Activated T-helper 1 cell treated with anti-CD3 and anti-CD28 coated beads, Interleukin-12 subunit alpha, Interleukin-12 subunit beta, Interleukin-2, Interleukin-4 antibody, amounts not matched to agents 30 ng/mL and 10 ng/mL and 1 ng/mL, durations not matched to agents 14 hours and 24 hours and 36 hours (primary cell): ENCODE measurements at regions of chr21 and their contacts with region 1.

Region 1: GRCh38 chr21:33199516-33200217 is 30.1 kb upstream of the IFNAR2 start:
- DNase-seq: peak; percentile 67
- H3K4me3 Mint-ChIP-seq: no peak overlapping the region
- H3K27ac Mint-ChIP-seq: no peak overlapping the region
- H3K4me1 Mint-ChIP-seq: peaks cover 27% of the 10 kb centered on the region
- H3K27me3 Mint-ChIP-seq: peaks cover 28% of the 10 kb centered on the region

Region 2: GRCh38 chr21:32834916-32835235 is 364.8 kb before region 1 on chr21:
- intact Hi-C with region 1: loop called (anchors 2 kb)
- DNase-seq: no peak
- H3K4me3 Mint-ChIP-seq: no peak overlapping the region
- H3K27ac Mint-ChIP-seq: no peak overlapping the region
- H3K4me1 Mint-ChIP-seq: no peaks in the 10 kb centered on the region
- H3K27me3 Mint-ChIP-seq: peaks cover 14% of the 10 kb centered on the region

Region 3: DNA sequence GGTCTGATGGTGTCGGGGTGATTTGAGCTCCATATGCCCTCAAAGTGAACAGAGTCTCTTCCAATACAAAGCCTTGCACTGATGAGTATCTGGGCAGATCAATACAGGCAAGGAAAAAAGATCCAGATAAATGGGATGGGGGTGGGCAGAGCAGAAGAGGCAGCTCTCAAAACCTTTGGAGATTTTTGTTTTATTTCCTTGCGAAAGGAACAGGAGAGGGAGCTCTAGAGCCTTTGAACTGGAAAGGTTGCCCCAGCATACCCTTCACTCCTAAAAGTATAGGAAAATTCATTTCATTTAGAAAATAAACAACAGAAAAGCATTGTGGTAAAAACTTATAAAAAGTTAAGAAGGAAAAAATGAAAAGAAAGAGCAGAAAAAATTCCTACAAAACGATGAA is 205.4 kb before region 1 on chr21:
- intact Hi-C with region 1: loop called (anchors 2 kb)
- DNase-seq: no peak
- H3K4me3 Mint-ChIP-seq: no peak overlapping the region
- H3K27ac Mint-ChIP-seq: no peak overlapping the region
- H3K4me1 Mint-ChIP-seq: no peaks in the 10 kb centered on the region
- H3K27me3 Mint-ChIP-seq: peaks cover 18% of the 10 kb centered on the region

Region 4: GRCh38 chr21:33266050-33266788 is 66.6 kb after region 1 on chr21 and contains the start of gene IL10RB:
- intact Hi-C with region 1: loop called (anchors 1 kb)
- DNase-seq: peak; percentile 66
- H3K4me3 Mint-ChIP-seq: peak within 1 kb of the TSS; percentile 97
- H3K27ac Mint-ChIP-seq: peak within 1 kb of the TSS; percentile 92
- H3K4me1 Mint-ChIP-seq: peaks cover 33% of the 10 kb centered on the region
- H3K27me3 Mint-ChIP-seq: no peaks in the 10 kb centered on the region
- total RNA-seq, gene IL10RB: 20.5 and 21.4 TPM in 2 replicates

Region 5: DNA sequence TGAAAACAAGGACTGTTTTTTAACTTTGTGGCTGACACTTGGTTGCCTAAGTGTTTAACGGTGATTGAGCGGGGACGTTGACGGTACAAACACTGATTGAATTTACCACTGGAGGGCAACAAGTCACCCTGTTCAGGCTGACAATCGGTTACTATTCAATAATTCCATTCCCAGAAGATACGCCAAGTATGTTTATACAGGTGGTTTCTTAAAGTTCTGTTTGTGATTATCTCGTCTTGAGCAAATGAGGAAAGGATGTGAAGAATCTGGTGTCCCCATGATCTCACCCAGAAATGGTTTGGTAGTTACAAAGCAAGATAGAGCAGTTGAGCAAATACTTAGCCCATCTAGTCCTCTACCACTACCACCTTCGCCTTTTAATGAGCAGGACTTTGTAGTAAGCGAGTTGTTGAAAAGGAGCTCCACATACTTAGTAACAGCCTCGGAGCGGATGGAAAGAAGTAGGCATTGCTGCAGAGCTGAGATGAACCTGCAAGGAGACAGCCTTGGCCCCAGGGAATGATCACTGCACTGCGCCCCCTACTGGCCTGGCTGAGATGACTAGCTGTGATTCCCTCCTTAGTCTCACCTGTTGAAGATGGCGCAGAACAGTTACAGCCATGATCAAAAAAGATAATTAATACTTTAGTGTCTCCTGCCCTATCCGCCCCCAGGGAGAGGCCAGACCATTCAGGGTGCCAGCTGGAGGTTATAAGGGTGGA is 161.4 kb after region 1 on chr21:
- intact Hi-C with region 1: loop called (anchors 1 kb)
- DNase-seq: peak; percentile 72
- H3K4me3 Mint-ChIP-seq: peak overlapping the region; percentile 83
- H3K27ac Mint-ChIP-seq: peak overlapping the region; percentile 64
- H3K4me1 Mint-ChIP-seq: peaks cover 21% of the 10 kb centered on the region
- H3K27me3 Mint-ChIP-seq: no peaks in the 10 kb centered on the region

Region 6: DNA sequence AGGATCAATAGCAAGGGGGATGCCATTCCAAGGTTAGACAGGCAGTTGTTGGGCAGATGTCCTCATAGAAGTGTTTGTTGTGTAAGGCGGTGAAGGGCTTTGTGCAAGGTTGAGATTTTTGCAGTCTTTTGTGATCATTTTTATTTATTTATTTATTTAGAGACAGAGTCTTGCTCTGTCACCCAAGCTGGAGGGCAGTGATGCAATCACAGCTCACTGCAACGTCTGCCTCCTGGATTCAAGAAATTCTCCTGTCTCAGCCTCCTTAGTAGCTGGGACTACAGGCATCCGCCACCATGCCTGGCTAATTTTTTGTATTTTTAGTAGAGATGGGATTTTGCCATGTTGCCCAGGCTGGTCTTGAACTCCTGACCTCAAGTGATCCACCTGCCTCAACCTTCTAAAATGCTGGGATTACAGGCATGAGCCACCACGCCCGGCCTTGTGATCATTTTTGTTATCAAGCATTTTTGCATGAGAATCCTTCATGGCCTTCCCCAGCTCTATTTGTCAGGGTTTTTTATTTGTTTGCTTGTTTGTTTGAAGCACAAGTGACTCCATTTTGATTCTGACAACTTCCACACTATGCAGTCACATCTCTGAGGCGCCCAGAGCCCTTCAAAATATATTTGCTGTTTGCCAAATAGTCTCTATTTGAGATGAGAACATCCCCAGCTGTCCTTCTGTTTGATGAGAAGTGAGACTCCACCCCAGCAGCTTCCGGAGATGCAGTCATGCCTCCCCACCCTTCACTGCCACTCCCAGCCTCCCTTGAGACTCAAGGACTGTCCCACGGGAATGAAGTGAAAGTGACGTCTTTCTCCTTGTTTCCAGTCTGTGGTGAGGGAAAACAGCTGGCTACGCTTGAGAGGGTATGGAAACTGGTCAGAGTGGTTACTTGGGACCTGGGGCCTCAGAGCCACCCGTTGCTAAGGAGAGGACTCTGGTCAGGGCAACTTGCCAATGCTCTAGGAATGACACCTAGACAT is 242.1 kb after region 1 on chr21:
- intact Hi-C with region 1: loop called (anchors 1 kb)
- DNase-seq: no peak
- H3K4me3 Mint-ChIP-seq: no peak overlapping the region
- H3K27ac Mint-ChIP-seq: no peak overlapping the region
- H3K4me1 Mint-ChIP-seq: peaks cover 3% of the 10 kb centered on the region
- H3K27me3 Mint-ChIP-seq: peaks cover 2% of the 10 kb centered on the region